Sigmoid colon (tissue), 7 donors: ENCODE measurements at regions of chr10 and their contacts with region 1.

Region 1: GRCh38 chr10:73848821-73849489 is 25.4 kb downstream of the CAMK2G start:
- DNase-seq: peak; percentile 93
- H3K4me3 ChIP-seq: no peak overlapping the region
- H3K27ac ChIP-seq: peak overlapping the region; percentile 83 to 92 (median 91)
- H3K4me1 ChIP-seq: peaks cover 0 to 55% (median 53%) of the 10 kb centered on the region in 4 donors
- H3K27me3 ChIP-seq: no peaks in the 10 kb centered on the region
- CTCF ChIP-seq: peak; percentile 100
- EP300 ChIP-seq: no peak
- POLR2A ChIP-seq: no peak

Region 2: GRCh38 chr10:73879296-73880173 is 30.6 kb after region 1 on chr10:
- intact Hi-C with region 1: loop called (anchors 1 kb)
- DNase-seq: peak; percentile 93
- H3K4me3 ChIP-seq: no peak overlapping the region
- H3K27ac ChIP-seq: peak overlapping the region in 3 of 4 donors; percentile 41 to 92 (median 61)
- H3K4me1 ChIP-seq: peaks cover 0 to 29% (median 10%) of the 10 kb centered on the region in 4 donors
- H3K27me3 ChIP-seq: no peaks in the 10 kb centered on the region
- CTCF ChIP-seq: peak; percentile 91 to 98 (median 94)
- EP300 ChIP-seq: no peak
- POLR2A ChIP-seq: no peak

Region 3: GRCh38 chr10:73940634-73941221 is 91.8 kb after region 1 on chr10:
- intact Hi-C with region 1: loop called (anchors 2 kb)
- DNase-seq: peak; percentile 92
- H3K4me3 ChIP-seq: peak overlapping the region in 3 of 4 donors; percentile 11 to 25 (median 22)
- H3K27ac ChIP-seq: peak overlapping the region; percentile 45 to 75 (median 60)
- H3K4me1 ChIP-seq: peaks cover 0 to 15% (median 11%) of the 10 kb centered on the region in 4 donors
- H3K27me3 ChIP-seq: no peaks in the 10 kb centered on the region
- CTCF ChIP-seq: peak; percentile 91 to 95 (median 94)
- EP300 ChIP-seq: no peak
- POLR2A ChIP-seq: no peak